Heart right ventricle (tissue), 16 donors: ENCODE measurements at regions of chr6 and their contacts with region 1.

Region 1: GRCh38 chr6:108848116-108848868 is at the start of gene ARMC2:
- DNase-seq: peak; percentile 93 to 97
- ATAC-seq: peak; percentile 97 to 98 (median 98)
- H3K4me3 ChIP-seq: peak within 1 kb of the TSS; percentile 56 to 88 (median 75)
- H3K27ac ChIP-seq: peak within 1 kb of the TSS; percentile 63 to 95 (median 85)
- H3K4me1 ChIP-seq: peaks cover 0 to 51% (median 31%) of the 10 kb centered on the region in 9 donors
- H3K27me3 ChIP-seq: no peaks in the 10 kb centered on the region
- CTCF ChIP-seq: no peak
- total RNA-seq, gene ARMC2: 10.6 to 16.4 (median 13.0) TPM

Region 2: DNA sequence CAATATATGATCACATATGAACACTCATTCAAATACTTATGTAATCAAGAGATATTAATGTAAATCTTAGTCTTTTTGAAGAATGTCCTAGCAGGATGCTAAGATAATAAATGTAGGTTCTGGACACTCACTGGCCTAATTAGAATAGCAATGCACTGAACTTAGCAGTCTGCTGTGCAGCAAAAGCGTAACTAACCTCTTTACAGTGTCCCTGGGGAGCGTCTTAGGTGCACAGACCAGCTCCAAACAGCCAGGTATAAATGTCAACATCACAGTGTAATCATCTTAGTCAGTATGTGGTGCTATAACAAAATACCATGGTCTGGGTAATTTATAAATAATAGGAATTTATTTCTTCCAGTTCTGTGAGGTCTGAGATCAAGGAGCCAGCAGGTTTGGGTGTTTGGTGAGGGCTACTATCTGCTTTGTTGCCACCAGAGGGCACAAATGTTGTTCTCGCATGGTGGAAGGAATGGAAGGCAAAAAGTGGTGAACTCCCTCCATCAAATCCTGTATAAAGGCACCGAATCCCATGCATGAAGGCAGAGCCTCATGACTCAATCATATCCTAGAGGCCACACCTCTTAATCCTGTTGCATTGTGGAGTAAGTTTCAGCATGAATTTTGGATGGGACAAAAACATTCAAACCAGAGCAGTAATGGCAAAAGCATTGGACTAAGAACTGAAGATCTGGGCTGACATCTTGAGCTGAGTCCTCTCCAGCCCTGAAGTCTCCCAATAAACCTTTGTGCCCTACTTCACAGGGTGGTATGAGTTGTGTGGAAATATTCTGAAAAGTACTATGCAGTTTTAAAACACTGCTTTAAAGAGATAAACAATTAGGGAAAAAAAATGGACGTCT is 329.3 kb before region 1 on chr6:
- intact Hi-C with region 1: no loop called
- DNase-seq: no peak
- ATAC-seq: no peak
- H3K4me3 ChIP-seq: no peak overlapping the region
- H3K27ac ChIP-seq: no peak overlapping the region
- H3K4me1 ChIP-seq: no peaks in the 10 kb centered on the region
- H3K27me3 ChIP-seq: no peaks in the 10 kb centered on the region
- CTCF ChIP-seq: peak in 6 of 9 donors; percentile 6 to 41 (median 22)

Region 3: GRCh38 chr6:108732136-108732885 is 116.0 kb before region 1 on chr6:
- intact Hi-C with region 1: no loop called
- DNase-seq: no peak
- ATAC-seq: peak in 3 of 8 donors; percentile 14 to 34 (median 18)
- H3K4me3 ChIP-seq: no peak overlapping the region
- H3K27ac ChIP-seq: no peak overlapping the region
- H3K4me1 ChIP-seq: peaks cover 0 to 15% (median 0%) of the 10 kb centered on the region in 9 donors
- H3K27me3 ChIP-seq: no peaks in the 10 kb centered on the region
- CTCF ChIP-seq: no peak

Region 4: GRCh38 chr6:108914235-108915022 is 66.1 kb after region 1 on chr6:
- intact Hi-C with region 1: loop called in 1 of 10 experiments (anchors 2 kb)
- DNase-seq: no peak
- ATAC-seq: peak in 4 of 8 donors; percentile 23 to 59 (median 33)
- H3K4me3 ChIP-seq: no peak overlapping the region
- H3K27ac ChIP-seq: peak overlapping the region in 1 of 10 donors; percentile 21
- H3K4me1 ChIP-seq: peaks cover 0 to 8% (median 0%) of the 10 kb centered on the region in 9 donors
- H3K27me3 ChIP-seq: no peaks in the 10 kb centered on the region
- CTCF ChIP-seq: peak in 8 of 9 donors; percentile 6 to 57 (median 38)

Region 5: DNA sequence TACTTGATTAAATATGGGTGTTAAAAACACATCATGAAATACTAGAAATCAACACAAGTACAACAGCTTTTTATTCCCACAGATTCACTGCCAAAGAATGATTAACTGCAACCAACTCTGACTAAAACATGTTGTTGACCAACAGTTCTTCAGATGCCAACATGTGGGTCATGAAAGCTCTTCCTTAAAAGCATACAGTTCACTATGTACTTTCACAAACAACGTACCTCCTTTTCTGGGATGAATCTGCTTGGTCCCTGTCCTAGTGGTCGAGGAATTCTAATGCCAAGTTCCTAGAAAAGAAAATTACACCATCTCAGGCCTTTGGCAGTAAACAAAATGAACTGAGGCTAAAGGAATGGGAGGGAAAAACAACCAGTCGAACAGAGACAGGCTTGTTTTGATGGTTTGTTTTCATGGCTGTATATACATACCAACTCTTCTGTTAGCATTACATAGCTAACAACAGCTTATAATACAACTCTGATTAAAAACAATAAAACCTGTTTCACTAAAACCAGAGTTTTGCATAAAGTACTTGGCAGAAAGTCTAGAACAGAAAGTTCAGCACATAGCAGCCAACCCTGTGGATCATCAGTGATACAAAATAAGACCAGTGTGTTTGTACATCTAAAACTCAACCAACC is 153.9 kb after region 1 on chr6:
- intact Hi-C with region 1: loop called in 1 of 10 experiments (anchors 5 kb)
- DNase-seq: no peak
- ATAC-seq: peak; percentile 17 to 86 (median 35)
- H3K4me3 ChIP-seq: no peak overlapping the region
- H3K27ac ChIP-seq: peak overlapping the region; percentile 29 to 70 (median 59)
- H3K4me1 ChIP-seq: peaks cover 2 to 92% (median 77%) of the 10 kb centered on the region in 9 donors
- H3K27me3 ChIP-seq: no peaks in the 10 kb centered on the region
- CTCF ChIP-seq: no peak